ENCODE measurements at regions of chr17 and their contacts with region 1.

Region 1: DNA sequence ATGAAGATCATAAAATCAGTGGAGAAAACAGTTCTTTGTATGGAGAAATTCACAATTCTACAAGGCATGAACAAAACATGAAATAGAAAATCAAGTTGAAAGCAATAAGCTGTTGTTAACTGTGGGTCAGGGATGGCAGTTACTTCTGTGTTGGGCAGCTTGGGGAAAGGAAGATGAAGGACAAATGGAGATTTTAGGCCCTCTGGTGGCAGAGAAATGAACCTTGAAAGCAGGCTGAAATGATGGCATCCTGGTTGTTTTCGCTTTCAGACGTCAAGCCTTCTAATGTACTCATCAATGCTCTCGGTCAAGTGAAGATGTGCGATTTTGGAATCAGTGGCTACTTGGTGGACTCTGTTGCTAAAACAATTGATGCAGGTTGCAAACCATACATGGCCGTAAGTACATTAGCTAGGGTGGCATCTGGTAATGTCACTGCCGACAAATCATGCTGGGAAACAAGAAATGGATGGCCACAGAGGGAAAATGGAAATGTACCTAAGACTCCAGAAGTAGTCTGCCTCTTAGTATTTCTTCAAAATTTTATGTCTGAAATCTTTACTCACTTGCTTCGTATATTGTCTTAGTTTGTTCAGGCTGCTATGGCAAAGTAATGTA is 108.9 kb downstream of the MAP2K6 start:
- DNase-seq: peak; percentile 24
- H3K4me3 ChIP-seq: no peak overlapping the region
- H3K27ac ChIP-seq: no peak overlapping the region
- H3K27me3 ChIP-seq: no peaks in the 10 kb centered on the region
- CTCF ChIP-seq: peak; percentile 86

Region 2: GRCh38 chr17:68771867-68772515 is 751.4 kb before region 1 on chr17:
- CTCF ChIA-PET with region 1: interaction called, 17 read pairs
- POLR2A ChIA-PET with region 1: no interaction called
- DNase-seq: peak; percentile 50
- H3K4me3 ChIP-seq: no peak overlapping the region
- H3K27ac ChIP-seq: no peak overlapping the region
- H3K27me3 ChIP-seq: no peaks in the 10 kb centered on the region
- CTCF ChIP-seq: peak; percentile 83

Region 3: DNA sequence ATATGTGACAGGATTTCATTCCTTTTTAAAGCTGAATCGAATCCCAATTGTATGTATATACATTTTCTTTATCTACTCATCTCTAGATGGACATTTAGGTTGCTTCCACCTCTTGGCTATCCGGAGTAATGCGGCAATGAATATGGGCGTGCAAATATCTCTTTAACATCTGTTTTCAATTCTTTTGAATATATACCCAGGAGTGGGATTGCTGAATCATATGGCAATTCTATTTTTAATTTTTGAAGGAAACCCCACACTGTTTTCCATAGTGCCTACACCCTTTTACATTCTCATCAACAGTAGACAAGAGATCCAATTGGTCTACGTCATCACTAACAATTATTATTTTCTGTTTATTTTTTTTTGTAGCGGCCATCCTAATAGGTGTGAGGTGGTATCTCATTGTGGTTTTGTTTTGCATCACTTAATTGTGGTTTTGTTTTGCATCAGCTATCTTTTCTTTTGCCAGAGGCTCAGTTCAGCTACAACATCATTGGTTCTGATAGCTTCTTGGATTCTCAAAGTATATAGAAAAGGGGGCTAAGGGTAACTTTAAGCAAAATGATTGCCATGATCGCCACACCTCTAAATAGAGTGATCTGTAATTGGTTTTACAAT is 134.4 kb before region 1 on chr17:
- CTCF ChIA-PET with region 1: interaction called, 18 read pairs
- POLR2A ChIA-PET with region 1: no interaction called
- DNase-seq: no peak
- H3K4me3 ChIP-seq: no peak overlapping the region
- H3K27ac ChIP-seq: no peak overlapping the region
- H3K27me3 ChIP-seq: peaks cover 4% of the 10 kb centered on the region
- CTCF ChIP-seq: no peak

Region 4: GRCh38 chr17:69448431-69449102 is 74.8 kb before region 1 on chr17:
- CTCF ChIA-PET with region 1: no interaction called
- POLR2A ChIA-PET with region 1: no interaction called
- DNase-seq: no peak
- H3K4me3 ChIP-seq: no peak overlapping the region
- H3K27ac ChIP-seq: no peak overlapping the region
- H3K27me3 ChIP-seq: no peaks in the 10 kb centered on the region
- CTCF ChIP-seq: no peak

Region 5: GRCh38 chr17:69539781-69540319 is 16.5 kb after region 1 on chr17:
- CTCF ChIA-PET with region 1: interaction called, 15 read pairs
- POLR2A ChIA-PET with region 1: no interaction called
- DNase-seq: peak; percentile 86
- H3K4me3 ChIP-seq: peak overlapping the region; percentile 35
- H3K27ac ChIP-seq: peak overlapping the region; percentile 98
- H3K27me3 ChIP-seq: no peaks in the 10 kb centered on the region
- CTCF ChIP-seq: no peak

Region 6: DNA sequence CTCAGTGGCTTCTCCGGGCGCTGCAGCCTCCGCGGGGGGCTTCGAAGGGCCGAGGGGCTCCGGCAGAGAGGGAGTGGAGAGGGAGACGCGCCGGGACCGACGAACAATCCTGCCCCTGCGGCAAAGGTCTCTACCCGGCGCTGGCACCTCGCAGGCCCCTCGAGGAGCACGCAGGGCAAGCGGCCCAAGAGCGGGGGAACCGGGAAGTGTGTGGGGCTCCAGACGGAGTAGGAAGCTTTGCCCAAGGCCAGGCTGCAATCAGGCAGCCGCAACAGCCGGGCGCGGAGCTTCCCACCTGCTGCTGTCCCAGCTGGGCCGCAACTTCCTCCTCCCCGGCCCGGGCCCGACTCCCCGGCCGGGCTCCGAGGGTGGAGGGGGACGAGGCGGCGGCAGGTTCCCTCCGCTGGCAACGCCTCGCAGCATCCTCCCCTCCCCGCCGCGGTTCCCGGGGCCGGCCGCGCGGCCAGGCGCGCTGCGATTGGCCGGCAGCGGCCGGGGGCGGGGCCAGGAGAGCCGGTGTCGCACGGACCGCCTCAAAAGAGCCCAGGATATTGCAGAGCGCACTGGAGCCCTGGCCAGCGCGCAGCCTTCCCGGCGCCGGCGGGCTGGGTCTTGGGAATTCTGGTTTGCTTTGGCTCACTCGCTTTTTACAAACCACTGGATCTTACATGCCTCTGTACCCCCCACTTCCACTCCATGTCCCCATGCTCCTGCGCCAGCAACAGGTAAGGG is 645.8 kb after region 1 on chr17 and contains the start of gene KCNJ2:
- CTCF ChIA-PET with region 1: interaction called, 10 read pairs
- POLR2A ChIA-PET with region 1: no interaction called
- DNase-seq: no peak
- H3K4me3 ChIP-seq: peak within 1 kb of the TSS; percentile 71
- H3K27ac ChIP-seq: no peak within 1 kb of the TSS
- H3K27me3 ChIP-seq: peaks cover 14% of the 10 kb centered on the region
- CTCF ChIP-seq: no peak
- polyA plus RNA-seq, gene KCNJ2: 1.7 and 2.4 TPM in 2 replicates

Region 7: GRCh38 chr17:70552230-70552981 is 1029.1 kb after region 1 on chr17:
- CTCF ChIA-PET with region 1: interaction called, 154 read pairs
- POLR2A ChIA-PET with region 1: no interaction called
- DNase-seq: no peak
- H3K4me3 ChIP-seq: no peak overlapping the region
- H3K27ac ChIP-seq: no peak overlapping the region
- H3K27me3 ChIP-seq: peaks cover 2% of the 10 kb centered on the region
- CTCF ChIP-seq: peak; percentile 51

Region 8: DNA sequence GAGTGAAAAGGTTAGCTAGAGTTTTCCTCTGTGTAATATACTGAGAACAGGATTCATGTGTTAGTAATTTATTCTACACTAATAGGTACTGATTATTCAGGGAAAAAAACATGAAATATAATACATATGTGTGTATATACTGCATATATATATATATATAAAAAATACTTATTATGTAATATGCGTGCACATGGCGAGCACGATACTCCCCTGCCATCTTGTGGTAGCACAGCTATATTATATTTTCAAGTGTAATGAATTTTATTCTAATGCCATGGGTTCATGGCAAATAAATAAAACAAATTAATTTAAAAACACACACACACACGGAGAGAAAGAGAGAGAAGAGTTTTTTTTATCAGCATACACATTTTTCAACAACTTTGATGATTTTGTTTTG is 1106.5 kb after region 1 on chr17:
- CTCF ChIA-PET with region 1: interaction called, 19 read pairs
- POLR2A ChIA-PET with region 1: no interaction called
- DNase-seq: no peak
- H3K4me3 ChIP-seq: no peak overlapping the region
- H3K27ac ChIP-seq: no peak overlapping the region
- H3K27me3 ChIP-seq: no peaks in the 10 kb centered on the region
- CTCF ChIP-seq: peak; percentile 38